IMR-90 (cell line): ENCODE measurements at regions of chr4 and their contacts with region 1.

Region 1: DNA sequence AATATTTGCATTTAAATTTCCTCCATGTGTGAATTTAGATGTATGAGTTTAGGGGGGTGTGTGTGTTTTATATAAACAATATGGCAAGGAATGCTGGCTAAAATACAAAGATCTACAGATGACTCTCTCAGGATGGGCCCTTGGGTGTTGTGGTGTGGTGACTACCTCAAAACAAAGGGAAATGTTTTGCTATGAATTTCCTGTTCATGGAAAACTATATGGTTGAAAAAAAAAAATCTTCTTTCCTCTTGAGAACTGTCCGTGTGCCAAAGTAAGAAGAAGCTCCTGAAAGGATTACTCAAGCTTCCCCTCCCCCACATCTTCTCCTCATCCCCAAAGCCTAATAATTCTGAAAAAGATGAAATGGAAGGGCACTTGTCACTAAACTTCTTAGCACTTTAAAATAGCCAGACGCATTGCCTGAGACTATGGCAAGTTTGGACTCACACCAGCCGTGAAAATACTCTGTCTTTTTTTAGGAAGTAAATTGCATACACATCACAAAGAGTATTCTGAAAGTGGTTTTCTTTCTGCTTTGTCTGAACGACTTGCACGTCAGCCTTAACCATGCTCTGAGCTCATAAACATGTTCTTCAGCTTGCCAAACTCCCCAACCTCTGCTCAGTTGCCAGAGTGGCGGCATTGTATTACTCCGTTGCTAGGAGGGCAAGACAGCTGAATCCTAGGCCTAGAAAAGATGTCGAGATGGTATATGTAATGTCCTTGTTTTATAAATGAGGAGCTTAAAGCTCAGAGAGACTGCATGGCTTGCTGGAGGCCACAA is 250.4 kb upstream of the JADE1 start:
- DNase-seq: peak; percentile 41
- ATAC-seq: no peak
- H3K4me3 ChIP-seq: no peak overlapping the region
- H3K27ac ChIP-seq: no peak overlapping the region
- H3K4me1 ChIP-seq: peaks cover 16% of the 10 kb centered on the region
- H3K27me3 ChIP-seq: no peaks in the 10 kb centered on the region
- CTCF ChIP-seq: no peak
- POLR2A ChIP-seq: no peak
- RAD21 ChIP-seq: no peak

Region 2: DNA sequence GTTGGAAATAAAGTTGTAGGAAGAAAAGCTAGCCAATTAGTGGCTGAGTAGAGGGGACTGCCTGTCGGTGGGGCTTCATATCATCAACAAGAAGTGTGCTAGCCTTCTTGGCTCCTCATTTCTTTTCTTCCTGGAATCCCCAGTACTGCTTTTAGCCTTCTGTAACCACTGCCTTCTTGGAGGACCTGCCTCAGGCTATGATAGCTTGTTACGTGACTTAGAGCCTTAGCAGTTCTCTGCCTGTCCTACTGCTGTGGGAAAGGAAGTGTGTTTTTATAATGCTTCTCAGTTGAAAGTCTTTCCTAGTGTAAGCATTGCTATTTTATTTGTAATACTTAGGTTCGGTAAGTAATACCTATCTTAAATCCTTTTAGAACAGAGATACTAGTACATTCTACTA is 436.1 kb before region 1 on chr4:
- CTCF ChIA-PET with region 1: no interaction called
- POLR2A ChIA-PET with region 1: no interaction called
- dilution Hi-C with region 1: no loop called
- in situ Hi-C with region 1: no loop called
- intact Hi-C with region 1: no loop called
- DNase-seq: no peak
- ATAC-seq: no peak
- H3K4me3 ChIP-seq: no peak overlapping the region
- H3K27ac ChIP-seq: no peak overlapping the region
- H3K4me1 ChIP-seq: no peaks in the 10 kb centered on the region
- H3K27me3 ChIP-seq: no peaks in the 10 kb centered on the region
- CTCF ChIP-seq: no peak
- POLR2A ChIP-seq: no peak
- RAD21 ChIP-seq: no peak

Region 3: DNA sequence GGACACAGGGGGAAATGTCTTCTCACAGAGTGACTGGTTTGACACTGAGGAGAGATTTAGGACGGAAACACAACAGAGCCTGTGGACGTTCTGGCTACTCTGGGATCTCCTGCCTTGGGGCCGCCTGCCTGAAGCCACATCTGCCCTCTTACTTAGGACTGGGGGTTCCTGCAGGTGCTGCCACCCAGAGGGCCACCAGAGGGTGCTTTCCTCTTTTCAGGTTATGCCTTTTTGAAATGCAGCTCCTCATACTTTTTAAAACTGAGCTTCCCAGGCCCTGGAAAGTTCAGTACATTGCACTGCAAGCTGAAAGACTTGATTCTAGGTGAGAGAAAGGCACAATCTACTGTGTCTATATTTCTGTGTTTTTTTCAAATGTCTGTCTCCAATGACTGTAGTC is 179.2 kb before region 1 on chr4:
- CTCF ChIA-PET with region 1: no interaction called
- POLR2A ChIA-PET with region 1: no interaction called
- dilution Hi-C with region 1: no loop called
- in situ Hi-C with region 1: no loop called
- intact Hi-C with region 1: loop called (anchors 10 kb)
- DNase-seq: peak; percentile 49
- ATAC-seq: peak; percentile 27; the same call in 1 of the 2 replicates
- H3K4me3 ChIP-seq: no peak overlapping the region
- H3K27ac ChIP-seq: no peak overlapping the region
- H3K4me1 ChIP-seq: peaks cover 10% of the 10 kb centered on the region
- H3K27me3 ChIP-seq: no peaks in the 10 kb centered on the region
- CTCF ChIP-seq: peak; percentile 55
- POLR2A ChIP-seq: no peak
- RAD21 ChIP-seq: peak; percentile 53

Region 4: DNA sequence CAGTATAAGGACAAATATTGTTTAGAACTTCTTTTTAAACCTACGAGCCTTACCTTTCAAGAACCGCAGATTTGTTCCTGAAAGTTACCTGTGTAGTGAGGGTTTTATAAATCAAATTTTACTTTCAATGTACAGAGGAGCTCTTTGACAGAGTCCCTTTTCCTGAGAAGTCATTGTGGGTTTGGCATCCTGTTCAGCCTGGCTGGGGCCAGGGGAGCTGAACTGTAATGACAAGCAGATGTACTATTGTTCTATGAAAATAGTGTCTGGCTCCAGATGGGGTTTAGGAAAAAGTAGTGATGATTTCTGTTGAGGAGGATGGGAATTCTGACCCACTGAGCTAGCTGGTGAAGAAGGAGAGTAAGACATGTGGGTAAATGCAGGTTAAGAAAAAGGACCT is 75.3 kb before region 1 on chr4:
- CTCF ChIA-PET with region 1: no interaction called
- POLR2A ChIA-PET with region 1: no interaction called
- dilution Hi-C with region 1: no loop called
- in situ Hi-C with region 1: no loop called
- intact Hi-C with region 1: no loop called
- DNase-seq: peak; percentile 27
- ATAC-seq: no peak; the same call in 1 of the 2 replicates
- H3K4me3 ChIP-seq: no peak overlapping the region
- H3K27ac ChIP-seq: no peak overlapping the region
- H3K4me1 ChIP-seq: peaks cover 4% of the 10 kb centered on the region; the same call in 1 of the 2 replicates
- H3K27me3 ChIP-seq: no peaks in the 10 kb centered on the region
- CTCF ChIP-seq: no peak
- POLR2A ChIP-seq: no peak
- RAD21 ChIP-seq: no peak